K562 (cell line): ENCODE measurements at regions of chr1 and their contacts with region 1.

Region 1: DNA sequence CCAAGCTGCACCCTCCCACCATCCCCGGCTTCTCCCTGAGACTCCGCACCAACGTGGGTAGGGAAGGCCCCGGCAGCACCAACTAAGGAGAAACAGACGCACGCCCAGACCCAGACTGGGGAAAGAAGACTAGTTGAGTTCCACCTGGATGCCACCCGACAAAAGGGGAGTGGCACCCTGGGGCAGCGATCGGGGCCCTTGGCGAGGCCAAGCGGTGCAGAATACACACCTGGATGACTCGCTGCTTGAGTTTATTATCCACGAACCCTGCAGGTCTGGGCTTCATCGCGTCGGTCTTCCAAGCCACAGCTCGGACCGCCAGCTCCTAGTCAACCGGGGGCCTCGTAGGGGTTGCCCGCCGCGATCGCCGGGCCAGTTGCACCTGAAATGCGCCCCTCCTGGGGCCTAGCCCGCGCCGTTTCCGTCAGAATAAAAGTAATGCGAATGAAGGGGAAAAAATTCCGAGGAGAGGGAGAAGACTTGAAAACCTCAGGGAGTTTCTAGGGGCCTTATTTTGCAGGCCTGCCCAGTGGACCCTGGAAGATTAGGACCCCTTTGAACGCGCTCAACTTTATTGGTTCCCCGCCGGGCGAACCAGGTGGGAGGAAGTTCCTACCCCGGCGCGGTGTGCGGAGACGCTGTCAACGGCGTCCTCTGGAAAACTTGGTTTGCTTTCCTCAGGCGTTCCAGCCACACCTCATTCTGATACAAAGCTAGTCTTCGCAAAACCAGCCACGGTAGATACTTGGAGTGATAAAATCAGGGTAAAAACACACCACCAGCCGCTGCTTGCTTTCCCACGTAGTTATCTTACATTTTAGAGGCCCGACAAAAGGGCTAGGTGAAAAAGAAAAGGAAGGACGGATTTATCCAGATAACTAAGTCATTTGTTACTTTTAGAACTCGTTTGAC is at the start of gene NVL:
- DNase-seq: peak; percentile 92 to 97 (median 94)
- ATAC-seq: peak; percentile 94
- H3K4me3 ChIP-seq: peak within 1 kb of the TSS; percentile 72
- H3K27ac ChIP-seq: peak within 1 kb of the TSS; percentile 92
- H3K4me1 ChIP-seq: peaks cover 9 to 25% of the 10 kb centered on the region in 2 experiments
- H3K27me3 ChIP-seq: no peaks in the 10 kb centered on the region
- CTCF ChIP-seq: no peak
- EP300 ChIP-seq: peak; percentile 70
- POLR2A ChIP-seq: peak; percentile 87
- RAD21 ChIP-seq: peak in 1 of 2 experiments; percentile 18; a peak in 2 of 4 replicates
- polyA plus RNA-seq, gene NVL: 32.5 to 64.1 TPM

Region 2: DNA sequence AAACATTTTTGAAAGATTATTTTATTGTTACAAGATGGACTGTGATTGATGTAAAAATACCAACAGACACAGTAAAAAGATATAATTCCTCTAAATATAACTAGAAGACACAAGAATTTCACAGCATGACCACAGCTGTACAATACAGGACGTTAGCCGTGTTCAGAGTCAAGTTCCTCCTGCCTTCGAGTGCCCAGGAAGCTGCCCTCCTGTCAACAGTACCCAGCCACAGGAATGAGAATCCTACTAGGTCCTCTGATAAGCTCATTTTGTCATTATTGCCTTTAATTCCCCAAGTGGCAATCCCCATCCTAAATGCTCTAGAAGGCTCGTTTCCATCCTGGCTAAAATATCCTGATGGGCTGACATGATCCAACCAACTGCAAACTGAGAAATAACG is 634.2 kb before region 1 on chr1:
- CTCF ChIA-PET with region 1: interaction called, 8 read pairs
- POLR2A ChIA-PET with region 1: no interaction called
- in situ Hi-C with region 1: loop called (anchors 5 kb)
- intact Hi-C with region 1: loop called (anchors 1 kb)
- DNase-seq: no peak
- ATAC-seq: no peak
- H3K4me3 ChIP-seq: no peak overlapping the region
- H3K27ac ChIP-seq: no peak overlapping the region
- H3K4me1 ChIP-seq: peaks cover 10 to 15% of the 10 kb centered on the region in 2 experiments
- H3K27me3 ChIP-seq: no peaks in the 10 kb centered on the region
- CTCF ChIP-seq: no peak
- EP300 ChIP-seq: no peak
- POLR2A ChIP-seq: no peak
- RAD21 ChIP-seq: no peak

Region 3: DNA sequence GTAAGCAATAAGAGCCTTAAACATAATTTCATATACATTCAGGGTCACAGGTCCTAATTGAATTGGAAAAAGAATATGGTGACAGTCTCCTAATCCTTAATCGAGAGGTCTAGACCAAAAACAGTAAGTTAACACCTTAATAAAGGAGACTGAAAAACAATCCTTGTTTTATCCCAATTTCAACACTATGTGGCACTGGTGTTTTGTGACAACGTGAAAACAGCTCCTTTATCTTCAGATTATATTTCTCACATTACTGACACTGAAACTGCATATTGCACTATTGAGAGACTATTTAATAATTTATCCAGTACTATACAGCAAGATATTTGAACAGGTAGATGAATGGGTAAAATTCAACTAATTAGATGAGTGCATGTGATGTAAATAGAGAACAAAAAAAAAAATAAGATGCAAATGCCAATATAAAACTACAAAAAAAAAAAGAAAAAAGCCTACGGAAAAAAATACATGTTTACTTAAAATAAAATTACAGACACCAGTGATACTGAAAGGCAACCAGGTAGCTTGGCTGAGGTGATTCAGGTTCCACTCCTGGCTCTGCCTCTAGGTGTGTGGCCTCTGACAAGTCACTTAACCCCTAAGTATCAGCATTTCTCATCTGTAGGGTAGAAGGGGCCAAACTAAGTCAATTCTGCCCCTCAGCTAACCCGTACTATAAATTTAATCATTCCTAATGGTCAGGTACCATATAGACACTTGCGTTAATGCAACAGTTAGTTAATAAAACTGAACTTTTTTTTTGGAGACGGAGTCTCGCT is 518.3 kb before region 1 on chr1:
- CTCF ChIA-PET with region 1: interaction called, 3 read pairs
- POLR2A ChIA-PET with region 1: no interaction called
- in situ Hi-C with region 1: no loop called
- intact Hi-C with region 1: loop called (anchors 1 kb)
- DNase-seq: peak in 1 of 4 experiments; percentile 58
- ATAC-seq: peak; percentile 81
- H3K4me3 ChIP-seq: no peak overlapping the region
- H3K27ac ChIP-seq: no peak overlapping the region
- H3K4me1 ChIP-seq: no peaks in the 10 kb centered on the region; a peak in 2 of 5 replicates
- H3K27me3 ChIP-seq: no peaks in the 10 kb centered on the region
- CTCF ChIP-seq: peak; percentile 45 to 87 (median 59); a peak in 4 of 6 replicates
- EP300 ChIP-seq: no peak
- POLR2A ChIP-seq: no peak
- RAD21 ChIP-seq: peak; percentile 96 to 98

Region 4: GRCh38 chr1:224061436-224061835 is 268.7 kb before region 1 on chr1:
- CTCF ChIA-PET with region 1: no interaction called
- POLR2A ChIA-PET with region 1: no interaction called
- in situ Hi-C with region 1: no loop called
- intact Hi-C with region 1: loop called (anchors 5 kb)
- DNase-seq: peak; percentile 64 to 79 (median 76)
- ATAC-seq: peak; percentile 90
- H3K4me3 ChIP-seq: no peak overlapping the region
- H3K27ac ChIP-seq: no peak overlapping the region
- H3K4me1 ChIP-seq: peaks cover 4 to 6% of the 10 kb centered on the region in 2 experiments; a peak in 4 of 5 replicates
- H3K27me3 ChIP-seq: no peaks in the 10 kb centered on the region
- CTCF ChIP-seq: peak; percentile 30 to 58 (median 33); a peak in 2 of 6 replicates
- EP300 ChIP-seq: peak; percentile 58; the same call in 1 of the 2 replicates
- POLR2A ChIP-seq: no peak
- RAD21 ChIP-seq: no peak

Region 5: DNA sequence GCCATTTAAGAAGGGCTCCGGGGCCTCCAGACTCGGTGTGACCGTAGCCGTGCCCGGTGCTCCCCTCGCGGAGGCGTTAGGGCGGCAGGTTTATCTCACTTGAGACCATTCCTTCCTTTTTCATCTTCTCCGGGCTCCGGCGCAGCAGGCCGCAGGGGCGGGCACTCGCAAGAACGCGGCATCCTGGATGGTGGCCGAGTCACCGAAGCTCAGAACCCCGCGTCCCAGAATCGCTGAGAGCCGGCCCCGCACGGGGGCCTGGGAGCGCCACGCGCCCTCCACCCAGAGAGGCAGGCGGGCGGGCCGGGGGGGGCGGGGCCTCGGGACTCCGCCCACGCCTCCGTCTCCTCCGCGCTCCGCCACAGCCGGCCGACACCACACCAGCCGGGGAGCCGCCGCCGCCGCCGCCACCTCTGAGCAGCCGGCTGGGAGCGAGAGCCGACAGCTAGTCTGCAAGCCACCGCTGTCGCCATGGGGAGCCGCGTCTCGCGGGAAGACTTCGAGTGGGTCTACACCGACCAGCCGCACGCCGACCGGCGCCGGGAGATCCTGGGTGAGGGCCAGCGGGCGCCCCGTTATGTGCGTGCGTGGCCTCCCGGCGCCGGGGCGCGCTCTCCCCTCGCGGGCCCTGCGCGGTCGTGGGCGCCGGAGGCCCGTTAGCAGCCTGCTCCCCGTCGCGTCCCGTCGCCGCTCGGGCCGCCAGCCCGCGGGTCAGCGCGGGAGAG is 147.1 kb before region 1 on chr1 and contains the start of gene DEGS1:
- CTCF ChIA-PET with region 1: no interaction called
- POLR2A ChIA-PET with region 1: interaction called, 5 read pairs
- in situ Hi-C with region 1: no loop called
- intact Hi-C with region 1: loop called (anchors 5 kb)
- DNase-seq: peak; percentile 93 to 100 (median 99)
- ATAC-seq: peak; percentile 92
- H3K4me3 ChIP-seq: peak within 1 kb of the TSS; percentile 82
- H3K27ac ChIP-seq: peak within 1 kb of the TSS; percentile 93
- H3K4me1 ChIP-seq: peaks cover 14 to 31% of the 10 kb centered on the region in 2 experiments; a peak in 4 of 5 replicates
- H3K27me3 ChIP-seq: no peaks in the 10 kb centered on the region
- CTCF ChIP-seq: peak in 2 of 3 experiments; percentile 5 to 11; a peak in 3 of 6 replicates
- EP300 ChIP-seq: 0 out of 2 replicates have a peak, but pooled peaks have one; percentile 2
- POLR2A ChIP-seq: peak; percentile 93
- RAD21 ChIP-seq: peak; percentile 15 to 19; a peak in 2 of 4 replicates
- polyA plus RNA-seq, gene DEGS1: 12.3 to 20.4 TPM

Region 6: GRCh38 chr1:224356685-224357625 is 26.9 kb after region 1 on chr1 and contains the start of gene CNIH4:
- CTCF ChIA-PET with region 1: no interaction called
- POLR2A ChIA-PET with region 1: interaction called, 5 read pairs
- in situ Hi-C with region 1: no loop called
- intact Hi-C with region 1: loop called (anchors 2 kb)
- DNase-seq: peak; percentile 94 to 97 (median 96)
- ATAC-seq: peak; percentile 95
- H3K4me3 ChIP-seq: peak within 1 kb of the TSS; percentile 79
- H3K27ac ChIP-seq: peak within 1 kb of the TSS; percentile 46
- H3K4me1 ChIP-seq: peaks cover 12 to 16% of the 10 kb centered on the region in 2 experiments
- H3K27me3 ChIP-seq: no peaks in the 10 kb centered on the region
- CTCF ChIP-seq: no peak; a peak in 1 of 6 replicates
- EP300 ChIP-seq: no peak
- POLR2A ChIP-seq: peak; percentile 84
- RAD21 ChIP-seq: no peak
- polyA plus RNA-seq, gene CNIH4: 237 to 266 TPM

Region 7: DNA sequence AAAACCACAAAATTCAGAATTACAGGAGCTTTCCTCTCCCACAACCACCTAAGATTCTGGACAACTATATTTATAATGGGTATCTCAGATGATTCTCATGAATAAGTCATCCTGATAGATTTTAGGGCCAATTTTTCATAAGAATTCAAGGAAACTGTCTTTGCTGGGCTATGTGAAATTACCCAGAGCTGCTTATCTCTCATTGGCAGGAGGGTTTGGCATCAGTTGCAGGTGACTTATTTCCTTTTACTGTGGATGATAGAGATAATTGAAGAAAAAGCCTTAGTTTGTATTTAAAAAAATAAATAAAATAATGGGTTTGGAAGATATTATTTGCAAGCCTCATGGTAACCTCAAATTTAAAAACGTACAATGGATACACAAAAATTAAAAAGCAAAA is 142.7 kb after region 1 on chr1:
- CTCF ChIA-PET with region 1: no interaction called
- POLR2A ChIA-PET with region 1: no interaction called
- in situ Hi-C with region 1: no loop called
- intact Hi-C with region 1: no loop called
- DNase-seq: no peak
- ATAC-seq: no peak
- H3K4me3 ChIP-seq: no peak overlapping the region
- H3K27ac ChIP-seq: no peak overlapping the region
- H3K4me1 ChIP-seq: no peaks in the 10 kb centered on the region
- H3K27me3 ChIP-seq: no peaks in the 10 kb centered on the region
- CTCF ChIP-seq: no peak
- EP300 ChIP-seq: peak; percentile 29; the same call in 1 of the 2 replicates
- POLR2A ChIP-seq: no peak
- RAD21 ChIP-seq: no peak

Region 8: DNA sequence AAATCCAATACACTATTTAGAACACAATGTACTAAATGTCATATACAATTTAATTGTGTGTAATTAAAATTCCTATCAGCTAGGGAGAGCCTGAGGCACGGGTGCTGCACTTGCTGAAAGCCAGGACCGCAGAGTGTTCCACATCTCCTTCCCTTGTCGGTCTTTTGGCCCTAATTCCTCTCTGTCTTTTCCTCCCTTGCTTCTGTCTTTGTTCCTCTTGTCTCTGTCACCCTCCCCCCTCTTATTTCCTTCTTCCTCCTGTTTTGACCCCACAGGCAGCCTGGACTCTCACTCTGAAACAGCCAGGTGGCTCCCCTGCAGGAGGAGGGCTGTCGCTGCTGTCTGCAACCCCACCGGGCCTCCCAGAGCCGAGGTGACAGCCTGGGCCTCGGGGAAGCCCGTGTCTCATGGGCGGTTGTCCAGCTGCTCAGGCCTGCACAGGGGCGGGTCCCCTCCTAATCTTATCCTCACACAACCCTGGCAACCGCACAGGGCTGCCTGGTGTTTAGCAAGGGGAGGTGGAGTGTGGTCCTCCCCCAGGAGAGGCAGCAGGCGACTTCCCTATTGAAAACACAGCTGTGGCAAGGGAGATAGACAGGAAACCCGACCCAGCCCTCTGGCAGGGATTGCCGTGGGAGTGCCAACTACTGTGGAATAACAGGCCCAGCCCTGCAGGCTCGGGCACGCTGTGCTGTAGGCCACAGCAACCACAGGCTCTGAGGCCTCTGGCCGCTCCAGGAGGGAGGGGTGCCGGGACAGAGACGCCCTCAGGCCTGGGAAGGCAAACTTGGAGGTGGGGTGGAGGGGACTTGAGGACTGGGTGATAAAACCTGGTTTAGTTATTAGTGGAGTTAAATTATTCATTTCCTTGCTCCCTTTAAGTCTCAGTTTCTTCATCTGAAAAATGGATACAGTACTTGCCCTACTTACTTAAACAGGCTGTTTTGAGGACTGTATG is 173.3 kb after region 1 on chr1:
- CTCF ChIA-PET with region 1: no interaction called
- POLR2A ChIA-PET with region 1: no interaction called
- in situ Hi-C with region 1: no loop called
- intact Hi-C with region 1: loop called (anchors 5 kb)
- DNase-seq: peak; percentile 99 to 100 (median 100)
- ATAC-seq: peak; percentile 97
- H3K4me3 ChIP-seq: peak overlapping the region; percentile 18; the same call in 1 of the 2 replicates
- H3K27ac ChIP-seq: peak overlapping the region; percentile 60
- H3K4me1 ChIP-seq: peaks cover 44 to 45% of the 10 kb centered on the region in 2 experiments
- H3K27me3 ChIP-seq: no peaks in the 10 kb centered on the region
- CTCF ChIP-seq: peak; percentile 66 to 73 (median 68)
- EP300 ChIP-seq: peak; percentile 96
- POLR2A ChIP-seq: 0 out of 2 replicates have a peak, but pooled peaks have one; percentile 35
- RAD21 ChIP-seq: peak; percentile 51 to 72